ENCODE measurements at regions of chr1 and their contacts with region 1.

Region 1: GRCh38 chr1:156500797-156501499 is 373 bp upstream of the MEF2D start:
- DNase-seq: peak; percentile 91 to 98 (median 94)
- ATAC-seq: peak; percentile 67 to 71
- H3K4me3 Mint-ChIP-seq: peak overlapping the region; percentile 78 to 98 (median 92)
- H3K27ac Mint-ChIP-seq: peak overlapping the region; percentile 95 to 100 (median 99)
- H3K4me1 Mint-ChIP-seq: peaks cover 47 to 76% (median 74%) of the 10 kb centered on the region in 4 donors
- H3K27me3 Mint-ChIP-seq: peaks cover 0 to 5% (median 0%) of the 10 kb centered on the region in 5 donors

Region 2: DNA sequence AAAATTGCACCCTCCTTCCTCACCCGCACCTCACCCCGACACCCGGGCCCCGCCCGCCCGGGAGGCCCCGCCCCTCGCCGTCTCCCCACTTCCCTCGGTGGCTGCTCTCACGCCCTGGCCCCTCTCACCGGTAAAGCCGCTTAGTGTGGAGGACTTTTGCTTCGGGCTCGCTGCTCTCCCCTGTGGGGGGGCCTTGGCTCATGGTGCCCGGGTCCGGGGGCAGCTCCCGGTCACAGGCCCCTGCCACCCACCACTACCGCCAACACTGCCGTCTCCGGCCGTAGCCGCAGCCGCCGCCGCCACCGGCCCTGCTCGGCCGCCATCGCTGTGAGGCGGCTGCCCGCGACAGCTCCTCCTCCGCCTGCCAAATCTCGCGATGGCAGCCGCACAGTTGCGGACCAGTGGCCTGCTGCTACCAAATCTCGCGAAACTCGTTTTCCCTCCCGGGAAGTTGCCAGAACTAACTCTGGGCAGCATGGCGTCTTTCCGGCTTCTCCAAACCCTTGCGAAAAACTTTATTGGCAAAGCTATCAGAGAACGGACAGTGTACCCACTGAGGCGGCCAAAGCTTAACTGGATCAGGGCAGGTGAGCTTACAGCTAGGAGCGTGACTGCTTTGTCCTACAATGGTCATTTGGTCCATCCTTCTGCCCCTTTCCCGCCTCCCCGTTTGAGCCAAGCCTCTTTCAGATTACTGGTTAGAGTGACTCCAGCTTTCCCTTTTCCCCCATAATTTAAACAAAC is 218.3 kb before region 1 on chr1 and contains the start of gene SMG5:
- POLR2A ChIA-PET with region 1: interaction called, 12 read pairs
- DNase-seq: peak; percentile 91 to 98 (median 96)
- ATAC-seq: peak; percentile 94 to 95
- H3K4me3 Mint-ChIP-seq: peak within 1 kb of the TSS; percentile 93 to 100 (median 97)
- H3K27ac Mint-ChIP-seq: peak within 1 kb of the TSS; percentile 92 to 98 (median 96)
- H3K4me1 Mint-ChIP-seq: peaks cover 28 to 50% (median 47%) of the 10 kb centered on the region in 4 donors
- H3K27me3 Mint-ChIP-seq: no peaks in the 10 kb centered on the region
- polyA plus RNA-seq, gene SMG5: 9.5 to 28.4 (median 11.1) TPM

Region 3: DNA sequence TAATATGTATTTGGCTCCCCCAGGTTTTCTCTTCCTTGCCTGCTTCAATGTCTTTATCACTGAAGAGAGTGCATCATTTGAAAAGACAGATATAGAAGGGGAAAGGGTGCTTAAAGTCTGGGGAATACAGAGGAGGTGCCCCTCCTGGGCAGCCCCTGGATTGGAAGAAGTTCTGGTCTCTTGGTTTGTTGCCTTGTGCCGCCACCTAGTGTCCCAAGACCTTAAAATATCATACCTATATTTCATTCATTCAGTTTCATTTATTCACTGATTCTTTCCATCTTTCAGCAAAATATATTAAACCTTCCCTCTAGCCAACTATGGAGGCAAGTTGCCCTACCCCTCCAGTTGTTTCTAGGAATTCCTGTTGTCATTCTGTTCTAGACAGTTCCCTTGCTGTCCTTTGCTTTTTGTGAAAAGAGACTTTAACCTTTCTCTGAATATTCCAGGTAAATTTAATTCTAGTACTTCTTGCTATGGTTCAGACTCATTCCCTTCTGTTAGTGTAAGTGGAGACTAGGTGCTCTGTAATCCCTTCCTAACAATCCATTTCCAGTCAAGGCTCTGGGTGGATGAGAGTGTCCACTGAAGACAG is 56.4 kb before region 1 on chr1:
- POLR2A ChIA-PET with region 1: no interaction called
- DNase-seq: peak in 2 of 10 donors; percentile 31 to 36
- ATAC-seq: peak; percentile 34 to 40
- H3K4me3 Mint-ChIP-seq: no peak overlapping the region
- H3K27ac Mint-ChIP-seq: no peak overlapping the region
- H3K4me1 Mint-ChIP-seq: peaks cover 3 to 9% (median 6%) of the 10 kb centered on the region in 4 donors
- H3K27me3 Mint-ChIP-seq: peaks cover 38 to 86% (median 59%) of the 10 kb centered on the region in 5 donors

Region 4: GRCh38 chr1:156461781-156462647 is 38.9 kb before region 1 on chr1:
- POLR2A ChIA-PET with region 1: interaction called, 72 read pairs
- DNase-seq: no peak
- ATAC-seq: no peak
- H3K4me3 Mint-ChIP-seq: no peak overlapping the region
- H3K27ac Mint-ChIP-seq: peak overlapping the region in 9 of 10 donors; percentile 49 to 87 (median 63)
- H3K4me1 Mint-ChIP-seq: peaks cover 21 to 41% (median 28%) of the 10 kb centered on the region in 4 donors
- H3K27me3 Mint-ChIP-seq: no peaks in the 10 kb centered on the region

Region 5: DNA sequence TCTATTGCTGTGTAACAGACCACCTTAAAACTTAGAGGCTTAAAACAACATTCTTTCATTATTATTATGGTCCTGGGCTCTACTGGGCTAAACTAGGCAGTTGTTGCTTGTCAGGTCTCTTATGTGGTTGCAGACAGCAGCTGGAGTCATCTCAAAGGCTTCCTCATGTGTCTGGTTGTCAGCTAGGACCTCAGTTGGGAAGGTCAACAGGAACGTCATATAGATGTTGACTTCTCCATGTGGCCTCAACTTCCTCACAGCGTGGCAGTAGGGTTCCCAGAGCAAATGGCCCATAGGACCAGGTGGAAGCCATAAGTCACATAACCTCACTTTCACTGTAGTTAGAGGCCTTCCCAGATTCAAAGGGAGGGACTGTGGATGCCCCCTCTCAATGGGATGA is 15.0 kb after region 1 on chr1:
- POLR2A ChIA-PET with region 1: interaction called, 21 read pairs
- DNase-seq: no peak
- ATAC-seq: no peak
- H3K4me3 Mint-ChIP-seq: no peak overlapping the region
- H3K27ac Mint-ChIP-seq: peak overlapping the region in 2 of 10 donors; percentile 64 to 68
- H3K4me1 Mint-ChIP-seq: peaks cover 0 to 9% (median 7%) of the 10 kb centered on the region in 4 donors
- H3K27me3 Mint-ChIP-seq: no peaks in the 10 kb centered on the region

Region 6: DNA sequence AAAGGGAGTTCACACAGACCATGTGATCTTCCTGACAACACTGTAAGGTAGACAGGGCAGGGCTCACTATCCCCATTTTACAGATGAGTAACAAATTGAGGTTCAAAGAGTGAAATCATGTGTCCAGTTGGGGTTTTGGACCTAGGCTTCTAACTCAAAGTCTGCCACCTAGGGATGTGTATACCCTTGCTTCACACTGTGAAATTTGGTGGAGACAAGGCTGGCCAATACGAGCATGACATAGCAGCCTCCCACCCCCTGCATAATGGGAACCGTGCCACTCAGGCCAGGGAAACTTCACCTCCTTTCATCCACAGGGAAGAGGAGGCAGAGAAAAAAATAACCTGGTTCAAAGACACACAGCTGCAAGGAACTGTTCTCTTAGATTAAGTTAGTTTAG is 64.6 kb after region 1 on chr1:
- POLR2A ChIA-PET with region 1: interaction called, 10 read pairs
- DNase-seq: no peak
- ATAC-seq: no peak
- H3K4me3 Mint-ChIP-seq: no peak overlapping the region
- H3K27ac Mint-ChIP-seq: peak overlapping the region in 1 of 10 donors; percentile 4
- H3K4me1 Mint-ChIP-seq: no peaks in the 10 kb centered on the region
- H3K27me3 Mint-ChIP-seq: peaks cover 0 to 9% (median 5%) of the 10 kb centered on the region in 5 donors

Region 7: GRCh38 chr1:156591432-156592157 is 90.6 kb after region 1 on chr1 and contains the start of gene NAXE:
- POLR2A ChIA-PET with region 1: interaction called, 31 read pairs
- DNase-seq: peak; percentile 39 to 78 (median 68)
- ATAC-seq: peak; percentile 95 to 96
- H3K4me3 Mint-ChIP-seq: peak within 1 kb of the TSS; percentile 76 to 93 (median 90)
- H3K27ac Mint-ChIP-seq: peak within 1 kb of the TSS; percentile 88 to 96 (median 95)
- H3K4me1 Mint-ChIP-seq: peaks cover 14 to 29% (median 16%) of the 10 kb centered on the region in 4 donors
- H3K27me3 Mint-ChIP-seq: no peaks in the 10 kb centered on the region
- polyA plus RNA-seq, gene NAXE: 85.6 to 124 (median 103) TPM